CD8-positive, alpha-beta memory T cell (primary cell): ENCODE measurements at regions of chr15 and their contacts with region 1.

Region 1: GRCh38 chr15:86629409-86630356 is 550.0 kb downstream of the AGBL1 start:
- DNase-seq: no peak
- H3K4me3 ChIP-seq: no peak overlapping the region
- H3K4me3 Mint-ChIP-seq: no peak overlapping the region
- H3K27ac ChIP-seq: no peak overlapping the region
- H3K27ac Mint-ChIP-seq: peak overlapping the region in 1 of 8 donors; percentile 11
- H3K4me1 ChIP-seq: peaks cover 4% of the 10 kb centered on the region
- H3K4me1 Mint-ChIP-seq: peaks cover 2 to 26% (median 2%) of the 10 kb centered on the region in 3 donors
- H3K27me3 ChIP-seq: no peaks in the 10 kb centered on the region
- H3K27me3 Mint-ChIP-seq: peaks cover 0 to 1% of the 10 kb centered on the region in 2 donors

Region 2: DNA sequence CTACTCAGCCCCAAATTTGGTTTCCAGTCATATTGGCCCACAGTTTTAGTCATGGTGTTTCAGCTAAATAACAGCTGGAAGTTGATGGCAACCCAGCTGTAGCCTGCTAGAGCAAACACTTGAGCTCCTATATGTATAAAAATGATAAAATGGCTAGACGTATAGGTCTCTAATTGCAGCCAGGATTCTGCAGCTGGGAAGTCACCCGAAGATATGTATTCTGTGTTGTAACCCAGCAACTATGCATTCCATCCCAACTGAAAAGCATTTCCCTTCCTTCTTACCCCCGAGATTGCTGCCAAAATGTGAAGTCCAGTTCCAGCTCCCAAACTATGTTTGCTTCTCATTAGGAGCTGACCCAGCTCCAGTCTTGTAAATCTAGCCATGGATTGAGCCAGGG is 141.6 kb before region 1 on chr15:
- CTCF ChIA-PET with region 1: no interaction called
- POLR2A ChIA-PET with region 1: no interaction called
- DNase-seq: no peak
- H3K4me3 ChIP-seq: no peak overlapping the region
- H3K4me3 Mint-ChIP-seq: no peak overlapping the region
- H3K27ac ChIP-seq: no peak overlapping the region
- H3K27ac Mint-ChIP-seq: no peak overlapping the region
- H3K4me1 ChIP-seq: no peaks in the 10 kb centered on the region
- H3K4me1 Mint-ChIP-seq: peaks cover 0 to 11% (median 5%) of the 10 kb centered on the region in 3 donors
- H3K27me3 ChIP-seq: no peaks in the 10 kb centered on the region
- H3K27me3 Mint-ChIP-seq: no peaks in the 10 kb centered on the region

Region 3: DNA sequence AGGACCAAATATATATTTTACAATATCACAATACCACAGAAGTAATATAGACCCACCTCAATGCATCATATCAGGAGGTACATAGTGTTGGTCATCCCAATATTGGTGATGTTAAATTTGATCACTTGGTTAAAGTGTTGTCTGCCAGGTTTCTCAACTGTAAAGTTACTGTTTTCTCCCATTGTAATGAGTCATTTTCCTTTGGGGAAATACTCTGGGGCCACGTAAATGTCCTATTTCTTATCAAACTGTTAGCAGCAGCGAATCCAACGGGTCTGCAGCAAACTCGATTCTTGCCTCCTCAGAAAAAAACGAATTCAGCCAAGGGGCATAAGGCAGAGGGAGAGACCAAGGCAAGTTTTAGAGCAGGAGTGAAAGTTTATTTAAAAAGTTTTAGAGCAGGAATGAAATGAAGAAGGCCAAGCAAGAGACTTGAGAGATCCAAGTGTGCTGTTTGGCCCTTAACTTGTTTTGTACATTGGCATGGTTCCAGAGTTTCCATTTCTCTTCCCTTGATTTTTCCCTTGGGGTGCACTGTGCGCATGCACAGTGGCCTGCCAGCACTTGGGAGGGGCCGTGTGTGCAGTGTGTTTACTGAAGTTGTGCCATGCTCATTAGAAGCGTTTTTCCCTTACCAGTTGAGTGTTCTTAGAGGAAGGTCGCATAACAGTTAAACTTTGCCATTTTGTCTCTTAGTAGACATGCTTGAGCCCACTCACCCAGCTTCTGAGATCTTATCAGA is 37.5 kb before region 1 on chr15:
- CTCF ChIA-PET with region 1: interaction called, 3 read pairs
- POLR2A ChIA-PET with region 1: interaction called, 11 read pairs
- DNase-seq: no peak
- H3K4me3 ChIP-seq: no peak overlapping the region
- H3K4me3 Mint-ChIP-seq: no peak overlapping the region
- H3K27ac ChIP-seq: no peak overlapping the region
- H3K27ac Mint-ChIP-seq: peak overlapping the region in 2 of 8 donors; percentile 12 to 84
- H3K4me1 ChIP-seq: no peaks in the 10 kb centered on the region
- H3K4me1 Mint-ChIP-seq: peaks cover 0 to 6% (median 0%) of the 10 kb centered on the region in 3 donors
- H3K27me3 ChIP-seq: no peaks in the 10 kb centered on the region
- H3K27me3 Mint-ChIP-seq: no peaks in the 10 kb centered on the region

Region 4: GRCh38 chr15:86691091-86691663 is 61.5 kb after region 1 on chr15:
- CTCF ChIA-PET with region 1: no interaction called
- POLR2A ChIA-PET with region 1: no interaction called
- DNase-seq: no peak
- H3K4me3 ChIP-seq: no peak overlapping the region
- H3K4me3 Mint-ChIP-seq: no peak overlapping the region
- H3K27ac ChIP-seq: no peak overlapping the region
- H3K27ac Mint-ChIP-seq: no peak overlapping the region
- H3K4me1 ChIP-seq: no peaks in the 10 kb centered on the region
- H3K4me1 Mint-ChIP-seq: peaks cover 0 to under 1% (median 0%) of the 10 kb centered on the region in 3 donors
- H3K27me3 ChIP-seq: no peaks in the 10 kb centered on the region
- H3K27me3 Mint-ChIP-seq: peaks cover 0 to 8% of the 10 kb centered on the region in 2 donors